ENCODE measurements at regions of chr2 and their contacts with region 1.

Region 1: GRCh38 chr2:177254433-177255226 is 9.9 kb downstream of the NFE2L2 start:
- DNase-seq: no peak

Region 2: DNA sequence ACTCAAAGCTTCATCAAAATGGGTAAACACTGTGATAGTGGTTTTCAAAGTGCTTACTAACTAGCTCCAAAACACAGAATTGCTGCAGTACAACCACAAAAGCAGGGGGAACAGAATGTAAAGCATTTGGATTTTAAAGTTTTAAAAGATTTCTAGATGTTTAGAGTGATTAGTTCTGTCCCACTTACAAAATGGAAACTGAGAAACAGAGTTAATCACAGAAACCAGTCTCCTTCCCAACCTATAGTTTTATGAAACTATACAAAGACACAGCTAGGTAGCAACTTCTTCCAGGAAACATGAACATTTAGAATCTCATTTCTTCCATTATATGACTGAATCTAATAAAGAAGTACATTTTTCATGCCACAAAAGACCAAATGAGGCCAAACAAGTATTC is 115.8 kb before region 1 on chr2:
- intact Hi-C with region 1: no loop called
- DNase-seq: no peak

Region 3: GRCh38 chr2:177164584-177165052 is 90.0 kb before region 1 on chr2:
- intact Hi-C with region 1: no loop called
- DNase-seq: peak; percentile 90

Region 4: GRCh38 chr2:177281400-177282180 is 27.0 kb after region 1 on chr2:
- intact Hi-C with region 1: no loop called
- DNase-seq: no peak

Region 5: GRCh38 chr2:177296040-177296439 is 41.4 kb after region 1 on chr2:
- intact Hi-C with region 1: loop called in 1 of 2 experiments (anchors 1 kb)
- DNase-seq: no peak

Measured in posterior vena cava (tissue), 2 donors.